Motor neuron (in vitro differentiated cells): ENCODE measurements at regions of chr1 and their contacts with region 1.

Region 1: DNA sequence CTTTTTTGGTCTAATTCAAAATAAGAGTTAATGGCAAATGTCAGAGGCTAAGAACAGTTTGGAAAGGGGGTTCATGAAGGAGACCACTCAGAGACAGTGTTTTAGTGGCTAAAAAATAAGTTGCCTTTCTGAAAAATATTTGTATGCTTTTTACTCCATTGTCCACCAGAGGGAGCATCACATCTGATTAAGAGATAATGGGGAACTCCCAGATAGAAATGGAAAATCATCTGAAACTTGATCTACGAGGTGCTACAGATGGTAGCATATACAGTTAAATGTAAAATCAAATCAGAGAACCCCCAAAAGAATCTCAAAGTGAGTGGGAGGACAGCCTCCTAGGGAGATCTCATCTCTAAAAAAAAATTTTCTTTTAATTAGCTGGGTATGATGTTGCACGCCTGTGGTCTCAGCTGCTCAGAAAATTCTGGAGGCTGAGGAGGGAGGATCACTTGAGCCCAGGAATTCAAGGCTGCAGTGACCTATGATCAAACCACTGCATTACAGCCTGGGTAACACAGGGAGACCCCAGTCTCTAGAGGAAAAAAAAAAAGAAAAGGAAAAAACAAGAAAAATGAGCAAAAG is 9.7 kb downstream of the SMYD3 start:
- ATAC-seq: peak in 3 of 8 experiments; percentile 21 to 46 (median 46)
- H3K4me3 ChIP-seq: no peak overlapping the region
- H3K27ac ChIP-seq: no peak overlapping the region
- H3K4me1 ChIP-seq: peaks cover 1 to 3% of the 10 kb centered on the region in 2 donors

Region 2: GRCh38 chr1:245129319-245130240 is 1367.8 kb before region 1 on chr1:
- in situ Hi-C with region 1: loop called in 2 of 9 experiments (anchors 25 kb)
- ATAC-seq: peak in 3 of 8 experiments; percentile 18 to 67 (median 55)
- H3K4me3 ChIP-seq: no peak overlapping the region
- H3K27ac ChIP-seq: no peak overlapping the region
- H3K4me1 ChIP-seq: peaks cover 6 to 8% of the 10 kb centered on the region in 2 donors

Region 3: GRCh38 chr1:245156081-245156735 is 1341.2 kb before region 1 on chr1:
- in situ Hi-C with region 1: loop called in 6 of 9 experiments (anchors 10 to 25 kb)
- ATAC-seq: peak; percentile 65 to 88 (median 70)
- H3K4me3 ChIP-seq: peak overlapping the region; percentile 60 to 75 (median 68)
- H3K27ac ChIP-seq: peak overlapping the region; percentile 42 to 69
- H3K4me1 ChIP-seq: peaks cover 0 to 5% of the 10 kb centered on the region in 2 donors

Region 4: GRCh38 chr1:246597340-246597739 is 99.9 kb after region 1 on chr1:
- in situ Hi-C with region 1: loop called in 1 of 9 experiments (anchors 25 kb)
- ATAC-seq: peak in 4 of 8 experiments; percentile 35 to 78 (median 57)
- H3K4me3 ChIP-seq: no peak overlapping the region
- H3K27ac ChIP-seq: no peak overlapping the region
- H3K4me1 ChIP-seq: no peaks in the 10 kb centered on the region